Right cardiac atrium (tissue), 5 donors: ENCODE measurements at regions of chr1 and their contacts with region 1.

Region 1: GRCh38 chr1:155591770-155592169 is 18.2 kb upstream of the MSTO1 start:
- DNase-seq: no peak
- ATAC-seq: peak; percentile 38 to 70
- H3K4me3 ChIP-seq: no peak overlapping the region
- H3K27ac ChIP-seq: no peak overlapping the region
- H3K4me1 ChIP-seq: no peaks in the 10 kb centered on the region
- H3K27me3 ChIP-seq: no peaks in the 10 kb centered on the region

Region 2: GRCh38 chr1:155250633-155251449 is 340.9 kb before region 1 on chr1:
- intact Hi-C with region 1: loop called in 2 of 4 experiments (anchors 5 to 10 kb)
- DNase-seq: peak; percentile 93 to 97 (median 97)
- ATAC-seq: peak; percentile 78 to 81
- H3K4me3 ChIP-seq: no peak overlapping the region
- H3K27ac ChIP-seq: no peak overlapping the region
- H3K4me1 ChIP-seq: peaks cover 9% of the 10 kb centered on the region
- H3K27me3 ChIP-seq: no peaks in the 10 kb centered on the region

Region 3: GRCh38 chr1:155287987-155288543 is 303.7 kb before region 1 on chr1:
- intact Hi-C with region 1: loop called in 1 of 4 experiments (anchors 10 kb)
- DNase-seq: no peak
- ATAC-seq: peak in 1 of 2 donors; percentile 10
- H3K4me3 ChIP-seq: no peak overlapping the region
- H3K27ac ChIP-seq: no peak overlapping the region
- H3K4me1 ChIP-seq: no peaks in the 10 kb centered on the region
- H3K27me3 ChIP-seq: no peaks in the 10 kb centered on the region

Region 4: GRCh38 chr1:155339515-155340097 is 252.2 kb before region 1 on chr1:
- intact Hi-C with region 1: loop called in 1 of 4 experiments (anchors 10 kb)
- DNase-seq: no peak
- ATAC-seq: no peak
- H3K4me3 ChIP-seq: no peak overlapping the region
- H3K27ac ChIP-seq: no peak overlapping the region
- H3K4me1 ChIP-seq: no peaks in the 10 kb centered on the region
- H3K27me3 ChIP-seq: no peaks in the 10 kb centered on the region

Region 5: GRCh38 chr1:155646307-155646706 is 54.5 kb after region 1 on chr1:
- intact Hi-C with region 1: no loop called
- DNase-seq: peak in 2 of 3 donors; percentile 63 to 71
- ATAC-seq: peak; percentile 27 to 30
- H3K4me3 ChIP-seq: no peak overlapping the region
- H3K27ac ChIP-seq: peak overlapping the region; percentile 34
- H3K4me1 ChIP-seq: peaks cover 3% of the 10 kb centered on the region
- H3K27me3 ChIP-seq: no peaks in the 10 kb centered on the region